Activated CD4-positive, alpha-beta memory T cell treated with anti-CD3 and anti-CD28 coated beads for 36 hours (primary cell): ENCODE measurements at regions of chr6 and their contacts with region 1.

Region 1: GRCh38 chr6:26156076-26156849 is 69.0 kb downstream of the HFE start:
- DNase-seq: peak; percentile 91
- H3K4me3 Mint-ChIP-seq: peak overlapping the region; percentile 81
- H3K27ac Mint-ChIP-seq: peak overlapping the region; percentile 93
- H3K4me1 Mint-ChIP-seq: peaks cover 46% of the 10 kb centered on the region
- H3K27me3 Mint-ChIP-seq: peaks cover 24% of the 10 kb centered on the region

Region 2: GRCh38 chr6:25042036-25042521 is 1114.2 kb before region 1 on chr6:
- CTCF ChIA-PET with region 1: no interaction called
- POLR2A ChIA-PET with region 1: no interaction called
- intact Hi-C with region 1: no loop called
- DNase-seq: peak; percentile 69
- H3K4me3 Mint-ChIP-seq: peak overlapping the region; percentile 91
- H3K27ac Mint-ChIP-seq: peak overlapping the region; percentile 97
- H3K4me1 Mint-ChIP-seq: peaks cover 60% of the 10 kb centered on the region
- H3K27me3 Mint-ChIP-seq: no peaks in the 10 kb centered on the region

Region 3: GRCh38 chr6:26054857-26055669 is 101.2 kb before region 1 on chr6:
- CTCF ChIA-PET with region 1: no interaction called
- POLR2A ChIA-PET with region 1: interaction called, 78 read pairs
- intact Hi-C with region 1: loop called (anchors 1 kb)
- DNase-seq: peak; percentile 94
- H3K4me3 Mint-ChIP-seq: peak overlapping the region; percentile 93
- H3K27ac Mint-ChIP-seq: peak overlapping the region; percentile 98
- H3K4me1 Mint-ChIP-seq: peaks cover 22% of the 10 kb centered on the region
- H3K27me3 Mint-ChIP-seq: peaks cover 14% of the 10 kb centered on the region

Region 4: GRCh38 chr6:26141378-26141904 is 14.8 kb before region 1 on chr6:
- CTCF ChIA-PET with region 1: no interaction called
- POLR2A ChIA-PET with region 1: interaction called, 18 read pairs
- intact Hi-C with region 1: no loop called
- DNase-seq: no peak
- H3K4me3 Mint-ChIP-seq: no peak overlapping the region
- H3K27ac Mint-ChIP-seq: no peak overlapping the region
- H3K4me1 Mint-ChIP-seq: no peaks in the 10 kb centered on the region
- H3K27me3 Mint-ChIP-seq: no peaks in the 10 kb centered on the region

Region 5: GRCh38 chr6:26204332-26205165 is 48.3 kb after region 1 on chr6:
- CTCF ChIA-PET with region 1: no interaction called
- POLR2A ChIA-PET with region 1: interaction called, 336 read pairs
- intact Hi-C with region 1: no loop called
- DNase-seq: peak; percentile 90
- H3K4me3 Mint-ChIP-seq: no peak overlapping the region
- H3K27ac Mint-ChIP-seq: no peak overlapping the region
- H3K4me1 Mint-ChIP-seq: peaks cover 21% of the 10 kb centered on the region
- H3K27me3 Mint-ChIP-seq: peaks cover 3% of the 10 kb centered on the region

Region 6: DNA sequence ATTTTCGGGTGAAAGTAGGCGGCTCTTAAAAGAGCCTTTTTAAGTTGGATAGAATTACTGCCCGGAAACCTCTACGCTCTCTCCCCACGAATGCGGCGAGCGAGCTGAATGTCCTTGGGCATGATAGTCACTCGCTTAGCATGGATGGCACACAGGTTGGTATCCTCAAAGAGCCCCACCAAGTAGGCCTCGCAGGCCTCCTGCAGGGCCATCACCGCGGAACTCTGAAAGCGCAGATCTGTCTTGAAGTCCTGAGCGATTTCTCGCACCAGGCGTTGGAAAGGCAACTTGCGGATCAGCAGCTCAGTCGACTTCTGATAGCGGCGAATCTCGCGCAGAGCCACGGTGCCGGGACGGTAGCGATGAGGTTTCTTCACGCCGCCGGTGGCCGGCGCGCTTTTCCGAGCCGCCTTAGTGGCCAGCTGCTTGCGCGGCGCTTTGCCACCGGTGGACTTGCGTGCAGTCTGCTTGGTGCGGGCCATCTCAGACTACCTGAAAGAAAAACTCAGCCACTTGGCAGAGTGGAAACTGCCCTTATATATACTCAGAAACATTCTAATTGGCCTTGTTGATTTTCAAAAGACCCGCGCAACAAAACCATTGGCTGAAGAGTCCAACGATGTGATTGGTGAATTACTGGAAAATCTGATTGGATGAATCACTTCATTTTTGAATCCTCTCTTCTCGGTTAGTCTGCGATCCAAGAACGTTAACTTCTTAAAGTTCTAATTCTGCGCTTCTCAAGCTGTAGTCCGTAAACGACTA is 114.8 kb after region 1 on chr6:
- CTCF ChIA-PET with region 1: interaction called, 3 read pairs
- POLR2A ChIA-PET with region 1: interaction called, 52 read pairs
- intact Hi-C with region 1: loop called (anchors 1 kb)
- DNase-seq: peak; percentile 86
- H3K4me3 Mint-ChIP-seq: no peak overlapping the region
- H3K27ac Mint-ChIP-seq: no peak overlapping the region
- H3K4me1 Mint-ChIP-seq: peaks cover 22% of the 10 kb centered on the region
- H3K27me3 Mint-ChIP-seq: peaks cover 2% of the 10 kb centered on the region

Region 7: DNA sequence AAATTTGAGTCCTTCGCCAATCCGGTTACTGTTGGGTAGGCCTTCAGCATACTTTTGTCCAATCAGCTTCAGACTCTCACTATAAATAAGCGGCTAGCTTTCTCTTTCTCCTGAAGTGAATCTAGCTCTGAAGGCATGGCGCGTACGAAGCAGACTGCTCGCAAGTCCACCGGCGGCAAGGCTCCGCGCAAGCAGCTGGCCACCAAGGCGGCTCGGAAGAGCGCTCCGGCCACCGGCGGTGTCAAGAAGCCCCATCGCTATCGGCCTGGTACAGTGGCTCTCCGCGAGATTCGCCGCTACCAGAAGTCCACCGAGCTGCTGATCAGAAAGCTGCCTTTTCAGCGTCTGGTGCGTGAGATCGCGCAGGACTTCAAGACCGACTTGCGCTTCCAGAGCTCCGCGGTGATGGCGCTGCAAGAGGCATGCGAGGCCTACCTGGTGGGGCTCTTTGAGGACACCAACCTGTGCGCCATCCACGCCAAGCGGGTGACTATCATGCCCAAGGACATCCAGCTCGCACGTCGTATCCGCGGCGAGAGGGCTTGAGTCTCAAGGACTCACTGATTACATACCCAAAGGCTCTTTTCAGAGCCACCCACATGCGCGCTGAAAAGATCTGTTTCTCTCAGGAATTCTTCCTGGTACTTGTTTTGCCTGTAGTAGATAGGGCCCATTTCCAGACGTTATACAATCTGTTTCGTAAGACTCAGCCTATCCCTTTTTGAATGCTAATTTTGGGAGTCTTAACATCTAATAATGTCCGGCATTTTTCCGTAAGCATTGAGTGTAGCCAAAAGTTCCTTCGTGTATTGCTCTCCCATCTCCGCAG is 1653.9 kb after region 1 on chr6:
- CTCF ChIA-PET with region 1: no interaction called
- POLR2A ChIA-PET with region 1: no interaction called
- intact Hi-C with region 1: loop called (anchors 10 kb)
- DNase-seq: peak; percentile 82
- H3K4me3 Mint-ChIP-seq: peak overlapping the region; percentile 85
- H3K27ac Mint-ChIP-seq: peak overlapping the region; percentile 96
- H3K4me1 Mint-ChIP-seq: peaks cover 61% of the 10 kb centered on the region
- H3K27me3 Mint-ChIP-seq: peaks cover 4% of the 10 kb centered on the region